B cell (primary cell): ENCODE measurements at regions of chr19 and their contacts with region 1.

Region 1: DNA sequence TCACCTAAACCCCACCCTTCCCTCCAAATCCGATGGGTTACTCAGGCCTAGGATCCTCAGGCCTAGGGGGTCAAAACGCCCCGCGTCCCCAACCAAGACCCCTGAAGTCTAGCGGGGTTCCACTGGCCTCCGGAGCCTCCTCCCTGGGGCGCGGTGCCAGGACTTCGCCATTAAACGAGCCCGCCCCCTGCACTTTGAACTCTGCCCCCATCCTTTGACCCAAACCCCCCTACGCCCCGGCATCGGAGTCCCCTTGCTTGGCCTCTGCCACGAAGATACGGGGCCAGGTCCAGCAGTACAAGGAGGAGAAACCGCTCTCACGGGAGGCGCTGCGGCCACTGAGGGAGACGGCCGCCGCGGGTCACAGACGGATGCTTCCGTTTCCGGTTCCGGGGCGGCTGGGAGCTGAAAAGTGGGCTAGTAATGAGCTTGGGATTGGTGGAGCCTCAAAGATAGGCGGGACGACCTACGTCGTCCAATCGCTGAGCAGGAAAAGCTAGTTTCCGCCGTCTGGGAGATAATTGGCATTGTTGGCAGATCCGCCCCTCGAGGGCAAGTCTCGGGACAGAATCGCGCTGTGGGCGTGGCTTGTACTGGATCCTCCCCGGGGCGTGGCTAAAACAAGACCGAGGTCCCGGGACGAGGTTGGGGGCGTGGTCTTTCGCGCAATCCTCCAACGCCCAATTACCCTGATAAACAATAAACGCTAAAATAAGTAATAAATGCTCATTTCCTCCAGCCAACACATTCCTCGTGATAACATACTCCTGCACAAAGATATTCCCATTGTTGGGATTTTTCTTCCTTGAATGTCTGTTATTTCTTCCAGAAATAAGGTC is 5.7 kb upstream of the ZNF77 start:
- DNase-seq: peak; percentile 100
- ATAC-seq: peak; percentile 94
- H3K4me3 ChIP-seq: peak overlapping the region; percentile 73 to 91 (median 84)
- H3K4me3 Mint-ChIP-seq: peak overlapping the region; percentile 94
- H3K27ac ChIP-seq: peak overlapping the region; percentile 92 to 98
- H3K27ac Mint-ChIP-seq: peak overlapping the region; percentile 99
- H3K4me1 ChIP-seq: peaks cover 8 to 21% of the 10 kb centered on the region in 2 donors
- H3K4me1 Mint-ChIP-seq: peaks cover 28% of the 10 kb centered on the region
- H3K27me3 ChIP-seq: no peaks in the 10 kb centered on the region
- H3K27me3 Mint-ChIP-seq: no peaks in the 10 kb centered on the region
- CTCF ChIP-seq: no peak

Region 2: GRCh38 chr19:2840794-2841790 is 109.4 kb before region 1 on chr19 and contains the start of gene ZNF555:
- CTCF ChIA-PET with region 1: no interaction called
- POLR2A ChIA-PET with region 1: interaction called, 3 read pairs
- intact Hi-C with region 1: loop called (anchors 2 kb)
- DNase-seq: peak; percentile 99
- ATAC-seq: peak; percentile 93
- H3K4me3 ChIP-seq: peak within 1 kb of the TSS; percentile 34 to 77 (median 73)
- H3K4me3 Mint-ChIP-seq: peak within 1 kb of the TSS; percentile 95
- H3K27ac ChIP-seq: peak within 1 kb of the TSS; percentile 83 to 86
- H3K27ac Mint-ChIP-seq: peak within 1 kb of the TSS; percentile 95
- H3K4me1 ChIP-seq: peaks cover 12 to 15% of the 10 kb centered on the region in 2 donors
- H3K4me1 Mint-ChIP-seq: peaks cover 26% of the 10 kb centered on the region
- H3K27me3 ChIP-seq: no peaks in the 10 kb centered on the region
- H3K27me3 Mint-ChIP-seq: no peaks in the 10 kb centered on the region
- CTCF ChIP-seq: peak; percentile 74
- total RNA-seq, gene ZNF555: 7.4 and 9.7 TPM in 2 replicates

Region 3: DNA sequence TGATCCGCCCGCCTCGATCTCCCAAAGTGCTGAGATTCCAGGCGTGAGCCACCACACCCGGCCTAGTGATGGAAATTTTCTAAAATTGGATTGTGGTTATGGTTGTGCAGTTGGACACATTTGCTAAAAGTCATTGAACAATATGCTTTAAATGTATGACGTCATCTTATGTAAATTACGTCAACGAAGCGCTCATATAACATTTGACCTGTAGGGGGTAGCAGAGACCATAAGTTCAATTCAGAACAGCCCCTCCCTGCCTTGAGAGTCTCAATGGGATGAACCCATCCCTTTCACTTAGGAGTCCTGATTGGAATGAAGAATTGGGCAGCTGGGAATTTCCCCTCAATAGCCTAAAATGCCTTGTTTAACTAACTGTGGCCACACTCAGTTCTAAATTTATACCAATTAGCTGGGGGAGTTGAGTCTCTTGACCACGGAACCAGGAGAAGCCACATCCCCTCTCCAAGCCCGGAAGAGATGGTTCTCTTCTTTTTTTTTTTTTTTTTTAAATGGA is 11.6 kb after region 1 on chr19:
- CTCF ChIA-PET with region 1: interaction called, 34 read pairs
- POLR2A ChIA-PET with region 1: interaction called, 5 read pairs
- intact Hi-C with region 1: no loop called
- DNase-seq: peak; percentile 91
- ATAC-seq: peak; percentile 73
- H3K4me3 ChIP-seq: peak overlapping the region in 3 of 5 experiments; percentile 2 to 33 (median 9)
- H3K4me3 Mint-ChIP-seq: peak overlapping the region; percentile 2
- H3K27ac ChIP-seq: no peak overlapping the region
- H3K27ac Mint-ChIP-seq: peak overlapping the region; percentile 71
- H3K4me1 ChIP-seq: peaks cover 13 to 18% of the 10 kb centered on the region in 2 donors
- H3K4me1 Mint-ChIP-seq: peaks cover 14% of the 10 kb centered on the region
- H3K27me3 ChIP-seq: no peaks in the 10 kb centered on the region
- H3K27me3 Mint-ChIP-seq: no peaks in the 10 kb centered on the region
- CTCF ChIP-seq: peak; percentile 82

Region 4: GRCh38 chr19:3075895-3076431 is 125.5 kb after region 1 on chr19:
- CTCF ChIA-PET with region 1: interaction called, 20 read pairs
- POLR2A ChIA-PET with region 1: no interaction called
- intact Hi-C with region 1: no loop called
- DNase-seq: peak; percentile 87
- ATAC-seq: peak; percentile 92
- H3K4me3 ChIP-seq: peak overlapping the region in 1 of 5 experiments; percentile 40
- H3K4me3 Mint-ChIP-seq: no peak overlapping the region
- H3K27ac ChIP-seq: no peak overlapping the region
- H3K27ac Mint-ChIP-seq: no peak overlapping the region
- H3K4me1 ChIP-seq: peaks cover 0 to 13% of the 10 kb centered on the region in 2 donors
- H3K4me1 Mint-ChIP-seq: peaks cover 9% of the 10 kb centered on the region
- H3K27me3 ChIP-seq: peaks cover 0 to 8% (median 2%) of the 10 kb centered on the region in 4 experiments
- H3K27me3 Mint-ChIP-seq: no peaks in the 10 kb centered on the region
- CTCF ChIP-seq: peak; percentile 88

Region 5: DNA sequence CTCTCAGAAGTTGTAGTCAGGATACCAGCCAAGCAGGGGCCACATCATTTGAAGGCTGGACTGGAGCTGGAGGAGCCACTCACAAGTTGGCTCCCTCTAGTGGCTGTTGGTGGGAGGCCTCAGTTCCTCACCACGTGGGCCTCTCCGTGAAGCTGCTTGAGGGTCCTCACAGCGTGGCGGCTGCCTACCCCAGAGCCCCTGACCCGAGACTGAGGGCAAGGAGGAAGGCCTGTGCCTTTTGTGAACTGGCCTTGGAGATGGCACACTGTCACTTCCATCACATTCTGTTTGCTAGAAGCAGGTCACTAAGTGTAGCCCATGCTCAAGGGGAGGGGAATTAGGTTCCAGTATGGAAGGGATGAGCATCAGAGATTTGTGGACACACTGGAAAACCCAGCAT is 158.3 kb after region 1 on chr19:
- CTCF ChIA-PET with region 1: interaction called, 281 read pairs
- POLR2A ChIA-PET with region 1: interaction called, 8 read pairs
- intact Hi-C with region 1: loop called (anchors 1 kb)
- DNase-seq: peak; percentile 82
- ATAC-seq: peak; percentile 76
- H3K4me3 ChIP-seq: no peak overlapping the region
- H3K4me3 Mint-ChIP-seq: no peak overlapping the region
- H3K27ac ChIP-seq: no peak overlapping the region
- H3K27ac Mint-ChIP-seq: peak overlapping the region; percentile 17
- H3K4me1 ChIP-seq: peaks cover 5 to 14% of the 10 kb centered on the region in 2 donors
- H3K4me1 Mint-ChIP-seq: peaks cover 11% of the 10 kb centered on the region
- H3K27me3 ChIP-seq: no peaks in the 10 kb centered on the region
- H3K27me3 Mint-ChIP-seq: no peaks in the 10 kb centered on the region
- CTCF ChIP-seq: peak; percentile 88

Region 6: GRCh38 chr19:3185482-3186376 is 235.2 kb after region 1 on chr19 and contains the start of gene NCLN:
- CTCF ChIA-PET with region 1: interaction called, 3 read pairs
- POLR2A ChIA-PET with region 1: interaction called, 3 read pairs
- intact Hi-C with region 1: loop called (anchors 1 kb)
- DNase-seq: peak; percentile 98
- ATAC-seq: peak; percentile 88
- H3K4me3 ChIP-seq: peak within 1 kb of the TSS; percentile 61 to 88 (median 79)
- H3K4me3 Mint-ChIP-seq: peak within 1 kb of the TSS; percentile 93
- H3K27ac ChIP-seq: peak within 1 kb of the TSS; percentile 62 to 77
- H3K27ac Mint-ChIP-seq: peak within 1 kb of the TSS; percentile 94
- H3K4me1 ChIP-seq: peaks cover 51 to 83% of the 10 kb centered on the region in 2 donors
- H3K4me1 Mint-ChIP-seq: peaks cover 66% of the 10 kb centered on the region
- H3K27me3 ChIP-seq: no peaks in the 10 kb centered on the region
- H3K27me3 Mint-ChIP-seq: no peaks in the 10 kb centered on the region
- CTCF ChIP-seq: no peak
- total RNA-seq, gene NCLN: 53.6 and 55.0 TPM in 2 replicates